ENCODE measurements at regions of chr9 and their contacts with region 1.

Region 1: DNA sequence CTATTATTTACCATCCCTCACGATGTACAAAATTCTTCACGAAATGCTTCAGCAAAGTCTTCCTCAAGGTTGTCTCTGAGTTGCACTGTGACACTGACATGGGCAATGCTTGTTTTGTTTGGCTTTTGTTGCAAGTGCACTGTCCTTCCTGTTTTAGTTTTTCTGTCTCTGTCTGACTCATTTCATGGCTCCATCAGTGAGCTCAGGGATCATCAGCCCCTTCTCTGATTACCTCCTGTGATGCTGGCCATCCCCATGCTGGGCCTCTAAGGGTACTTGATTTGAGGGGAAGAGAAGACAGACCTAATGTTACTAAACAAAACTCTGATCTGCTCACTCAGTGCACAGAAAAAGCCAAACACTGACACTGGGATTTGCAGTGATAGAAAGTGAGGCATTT is 37.6 kb upstream of the STX17 start:
- DNase-seq: no peak
- ATAC-seq: no peak
- H3K4me3 ChIP-seq: no peak overlapping the region
- H3K4me3 Mint-ChIP-seq: no peak overlapping the region
- H3K27ac ChIP-seq: no peak overlapping the region
- H3K27ac Mint-ChIP-seq: no peak overlapping the region
- H3K4me1 ChIP-seq: no peaks in the 10 kb centered on the region
- H3K4me1 Mint-ChIP-seq: no peaks in the 10 kb centered on the region
- H3K27me3 ChIP-seq: no peaks in the 10 kb centered on the region
- H3K27me3 Mint-ChIP-seq: no peaks in the 10 kb centered on the region
- CTCF ChIP-seq: no peak

Region 2: DNA sequence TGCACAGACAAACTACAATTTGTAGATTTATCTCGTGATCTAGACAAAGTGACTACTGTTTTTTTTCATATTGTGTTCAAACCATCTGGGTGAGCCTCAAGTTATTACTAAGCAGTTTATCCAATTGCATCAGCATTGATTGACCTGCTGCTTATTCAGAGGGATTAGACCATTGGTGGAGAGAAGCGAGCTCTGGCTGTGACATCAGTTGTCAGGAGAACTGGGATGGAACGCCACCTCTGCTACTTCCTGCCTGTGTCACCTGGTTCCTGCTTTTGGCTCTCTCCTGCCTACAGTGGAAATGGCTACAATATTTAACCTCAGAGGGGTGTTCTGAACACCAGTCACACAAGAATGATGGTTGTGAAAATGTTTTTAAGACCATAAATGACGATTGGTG is 35.1 kb before region 1 on chr9:
- CTCF ChIA-PET with region 1: interaction called, 3 read pairs
- POLR2A ChIA-PET with region 1: no interaction called
- intact Hi-C with region 1: loop called in 1 of 2 experiments (anchors 5 kb)
- DNase-seq: no peak
- ATAC-seq: no peak
- H3K4me3 ChIP-seq: no peak overlapping the region
- H3K4me3 Mint-ChIP-seq: no peak overlapping the region
- H3K27ac ChIP-seq: no peak overlapping the region
- H3K27ac Mint-ChIP-seq: no peak overlapping the region
- H3K4me1 ChIP-seq: no peaks in the 10 kb centered on the region
- H3K4me1 Mint-ChIP-seq: no peaks in the 10 kb centered on the region
- H3K27me3 ChIP-seq: no peaks in the 10 kb centered on the region
- H3K27me3 Mint-ChIP-seq: peaks cover 17% of the 10 kb centered on the region
- CTCF ChIP-seq: no peak

Region 3: GRCh38 chr9:99851500-99851822 is 17.4 kb before region 1 on chr9:
- CTCF ChIA-PET with region 1: no interaction called
- POLR2A ChIA-PET with region 1: no interaction called
- intact Hi-C with region 1: loop called in 1 of 2 experiments (anchors 2 kb)
- DNase-seq: peak in 8 of 9 experiments; percentile 5 to 88 (median 43)
- ATAC-seq: peak; percentile 77
- H3K4me3 ChIP-seq: no peak overlapping the region
- H3K4me3 Mint-ChIP-seq: peak overlapping the region; percentile 4
- H3K27ac ChIP-seq: peak overlapping the region in 1 of 2 experiments; percentile 58
- H3K27ac Mint-ChIP-seq: no peak overlapping the region
- H3K4me1 ChIP-seq: peaks cover 19% of the 10 kb centered on the region
- H3K4me1 Mint-ChIP-seq: peaks cover 32% of the 10 kb centered on the region
- H3K27me3 ChIP-seq: no peaks in the 10 kb centered on the region
- H3K27me3 Mint-ChIP-seq: no peaks in the 10 kb centered on the region
- CTCF ChIP-seq: no peak